Right cardiac atrium (tissue), 5 donors: ENCODE measurements at regions of chr12 and their contacts with region 1.

Region 1: GRCh38 chr12:6383572-6384498 is at the start of gene LTBR:
- DNase-seq: peak; percentile 98 to 99 (median 99)
- ATAC-seq: peak; percentile 97 to 98
- H3K4me3 ChIP-seq: peak within 1 kb of the TSS; percentile 57
- H3K27ac ChIP-seq: peak within 1 kb of the TSS; percentile 90
- H3K4me1 ChIP-seq: peaks cover 12% of the 10 kb centered on the region
- H3K27me3 ChIP-seq: no peaks in the 10 kb centered on the region
- total RNA-seq, gene LTBR: 37.6 to 54.2 (median 40.3) TPM

Region 2: DNA sequence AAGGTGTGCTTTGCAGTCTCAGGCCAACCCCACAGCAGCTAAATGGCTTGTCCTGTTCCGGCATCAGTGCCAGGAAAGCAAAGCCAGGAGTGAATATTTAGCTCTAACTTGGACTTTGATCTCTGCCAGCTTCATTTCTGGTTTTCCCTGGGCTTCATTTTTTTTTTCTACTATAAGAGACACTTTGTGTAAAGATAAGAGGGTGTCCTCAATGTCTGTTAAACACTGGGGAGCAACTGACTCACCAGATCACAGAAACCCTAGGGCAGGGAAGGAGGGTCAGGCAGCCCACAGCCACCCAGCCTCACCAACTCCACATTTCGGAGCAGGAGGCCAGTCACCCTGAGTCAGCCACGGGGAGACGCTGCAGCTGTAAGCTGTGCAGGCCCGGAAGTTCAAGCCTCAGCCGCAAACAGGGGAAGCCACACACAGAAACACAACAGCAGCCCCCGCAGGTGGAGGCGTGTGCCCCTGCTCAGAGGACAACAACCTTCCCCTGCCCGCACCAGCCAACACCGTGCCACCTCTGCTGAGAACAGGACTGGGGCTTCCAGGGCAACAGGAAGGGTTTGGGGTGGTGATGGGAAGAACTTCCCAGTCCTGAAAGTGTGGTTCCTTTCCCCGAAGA is 48.3 kb before region 1 on chr12:
- intact Hi-C with region 1: loop called (anchors 5 to 10 kb)
- DNase-seq: peak; percentile 83 to 87 (median 87)
- ATAC-seq: peak; percentile 34 to 57
- H3K4me3 ChIP-seq: peak overlapping the region; percentile 33
- H3K27ac ChIP-seq: peak overlapping the region; percentile 90
- H3K4me1 ChIP-seq: peaks cover 20% of the 10 kb centered on the region
- H3K27me3 ChIP-seq: no peaks in the 10 kb centered on the region

Region 3: GRCh38 chr12:6341417-6342139 is 42.3 kb before region 1 on chr12 and contains the start of gene TNFRSF1A:
- intact Hi-C with region 1: loop called (anchors 5 to 10 kb)
- DNase-seq: peak; percentile 79 to 89 (median 86)
- ATAC-seq: peak; percentile 82 to 87
- H3K4me3 ChIP-seq: peak within 1 kb of the TSS; percentile 87
- H3K27ac ChIP-seq: peak within 1 kb of the TSS; percentile 92
- H3K4me1 ChIP-seq: peaks cover 26% of the 10 kb centered on the region
- H3K27me3 ChIP-seq: no peaks in the 10 kb centered on the region
- total RNA-seq, gene TNFRSF1A: 65.6 to 103 (median 75.9) TPM

Region 4: GRCh38 chr12:6434205-6435140 is 50.6 kb after region 1 on chr12:
- intact Hi-C with region 1: no loop called
- DNase-seq: no peak
- ATAC-seq: no peak
- H3K4me3 ChIP-seq: no peak overlapping the region
- H3K27ac ChIP-seq: no peak overlapping the region
- H3K4me1 ChIP-seq: peaks cover 3% of the 10 kb centered on the region
- H3K27me3 ChIP-seq: no peaks in the 10 kb centered on the region

Region 5: GRCh38 chr12:6890789-6891645 is 507.2 kb after region 1 on chr12:
- intact Hi-C with region 1: no loop called
- DNase-seq: peak; percentile 98 to 100 (median 100)
- ATAC-seq: peak; percentile 97 to 98
- H3K4me3 ChIP-seq: peak overlapping the region; percentile 63
- H3K27ac ChIP-seq: peak overlapping the region; percentile 96
- H3K4me1 ChIP-seq: peaks cover 2% of the 10 kb centered on the region
- H3K27me3 ChIP-seq: no peaks in the 10 kb centered on the region